Head of caudate nucleus (tissue), 42 donors: ENCODE measurements at regions of chr11 and their contacts with region 1.

Region 1: DNA sequence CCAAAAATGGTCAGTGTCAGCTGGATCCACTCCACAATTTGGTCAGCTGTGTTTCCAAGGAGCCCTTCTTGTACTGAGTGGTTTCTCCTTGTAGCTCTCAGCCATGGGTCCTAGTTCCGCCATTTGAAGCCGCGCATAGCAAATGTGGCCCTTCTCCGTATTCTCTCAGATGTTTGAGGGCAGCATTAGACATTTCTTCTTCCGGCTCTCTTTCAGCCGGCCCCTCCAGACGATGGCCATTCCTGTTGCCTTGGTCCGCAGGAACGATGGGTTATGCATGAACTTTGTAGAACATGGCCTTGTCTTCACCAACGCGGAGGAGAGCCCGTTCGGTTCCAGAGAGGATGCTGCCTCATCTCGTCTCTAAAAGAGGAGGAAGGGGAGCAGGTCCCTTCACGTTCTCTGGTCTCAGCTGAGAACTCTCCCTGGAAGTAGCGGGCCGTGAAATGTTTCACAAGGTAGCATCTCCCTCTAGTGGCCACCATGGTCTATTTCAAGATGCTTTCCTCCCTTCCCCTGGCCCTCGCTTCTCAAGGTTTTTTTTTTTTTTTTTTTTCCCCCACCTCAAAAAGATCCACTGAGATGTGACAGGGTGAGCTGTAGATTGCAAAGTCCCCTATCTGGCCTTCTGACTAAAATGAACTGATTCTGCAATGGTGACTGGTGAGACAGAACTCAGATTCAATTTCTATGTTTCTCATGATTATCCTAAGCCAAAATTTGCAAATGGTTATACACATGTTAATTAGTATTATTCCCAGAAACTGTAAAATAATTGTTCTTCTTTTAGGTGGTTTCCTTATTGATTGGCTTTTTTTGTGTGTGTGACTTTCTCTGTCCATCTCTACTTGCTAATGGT is 19.8 kb upstream of the PLET1 start:
- DNase-seq: peak; percentile 40 to 92 (median 74)

Region 2: GRCh38 chr11:112219476-112220232 is 60.8 kb before region 1 on chr11:
- intact Hi-C with region 1: loop called (anchors 5 kb)
- DNase-seq: peak in 32 of 42 donors; percentile 6 to 84 (median 49)

Region 3: GRCh38 chr11:112226062-112226830 is 54.3 kb before region 1 on chr11 and contains the start of gene PTS:
- intact Hi-C with region 1: loop called (anchors 2 kb)
- DNase-seq: peak; percentile 62 to 94 (median 88)

Region 4: DNA sequence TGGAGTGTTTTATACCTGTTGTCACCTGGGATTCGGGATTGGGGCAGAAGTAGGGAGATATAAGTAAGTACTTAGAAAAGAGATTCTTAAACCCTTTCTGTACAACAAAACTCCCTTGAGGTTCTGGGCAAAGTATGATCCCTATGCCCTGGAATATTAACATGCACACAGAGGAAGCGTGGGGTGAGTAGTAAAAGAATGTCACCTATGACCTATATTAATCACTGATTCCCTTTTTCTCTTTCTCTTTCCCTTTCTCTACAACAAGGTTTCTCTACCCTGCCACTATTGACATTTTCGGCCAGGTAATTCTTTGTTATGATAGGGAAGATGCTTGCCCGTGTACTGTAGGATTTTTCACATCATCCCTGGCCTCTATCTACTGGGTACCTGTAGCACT is 189.9 kb after region 1 on chr11:
- intact Hi-C with region 1: no loop called
- DNase-seq: no peak